ENCODE measurements at regions of chr3 and their contacts with region 1.

Region 1: GRCh38 chr3:71247221-71247976 is 336.1 kb downstream of the FOXP1 start:
- DNase-seq: no peak
- ATAC-seq: no peak
- H3K4me3 ChIP-seq: no peak overlapping the region
- H3K27ac ChIP-seq: peak overlapping the region in 1 of 2 donors; percentile 42
- H3K4me1 ChIP-seq: peaks cover 0 to 2% of the 10 kb centered on the region in 2 donors
- H3K27me3 ChIP-seq: no peaks in the 10 kb centered on the region

Region 2: GRCh38 chr3:71103430-71103921 is 143.9 kb before region 1 on chr3:
- intact Hi-C with region 1: loop called in 1 of 2 experiments (anchors 5 kb)
- DNase-seq: peak; percentile 68 to 85
- ATAC-seq: no peak
- H3K4me3 ChIP-seq: no peak overlapping the region
- H3K27ac ChIP-seq: peak overlapping the region in 1 of 2 donors; percentile 91
- H3K4me1 ChIP-seq: peaks cover 17 to 26% of the 10 kb centered on the region in 2 donors
- H3K27me3 ChIP-seq: no peaks in the 10 kb centered on the region

Region 3: GRCh38 chr3:71117572-71118247 is 129.7 kb before region 1 on chr3:
- intact Hi-C with region 1: loop called in 1 of 2 experiments (anchors 5 kb)
- DNase-seq: no peak
- ATAC-seq: no peak
- H3K4me3 ChIP-seq: no peak overlapping the region
- H3K27ac ChIP-seq: peak overlapping the region; percentile 1 to 58
- H3K4me1 ChIP-seq: peaks cover 11 to 15% of the 10 kb centered on the region in 2 donors
- H3K27me3 ChIP-seq: no peaks in the 10 kb centered on the region

Region 4: GRCh38 chr3:71130471-71131374 is 116.7 kb before region 1 on chr3:
- intact Hi-C with region 1: loop called in 1 of 2 experiments (anchors 5 kb)
- DNase-seq: peak in 1 of 2 donors; percentile 82
- ATAC-seq: peak; percentile 69
- H3K4me3 ChIP-seq: peak overlapping the region; percentile 89 to 99
- H3K27ac ChIP-seq: peak overlapping the region; percentile 98 to 99
- H3K4me1 ChIP-seq: peaks cover 0 to 2% of the 10 kb centered on the region in 2 donors
- H3K27me3 ChIP-seq: no peaks in the 10 kb centered on the region

Region 5: DNA sequence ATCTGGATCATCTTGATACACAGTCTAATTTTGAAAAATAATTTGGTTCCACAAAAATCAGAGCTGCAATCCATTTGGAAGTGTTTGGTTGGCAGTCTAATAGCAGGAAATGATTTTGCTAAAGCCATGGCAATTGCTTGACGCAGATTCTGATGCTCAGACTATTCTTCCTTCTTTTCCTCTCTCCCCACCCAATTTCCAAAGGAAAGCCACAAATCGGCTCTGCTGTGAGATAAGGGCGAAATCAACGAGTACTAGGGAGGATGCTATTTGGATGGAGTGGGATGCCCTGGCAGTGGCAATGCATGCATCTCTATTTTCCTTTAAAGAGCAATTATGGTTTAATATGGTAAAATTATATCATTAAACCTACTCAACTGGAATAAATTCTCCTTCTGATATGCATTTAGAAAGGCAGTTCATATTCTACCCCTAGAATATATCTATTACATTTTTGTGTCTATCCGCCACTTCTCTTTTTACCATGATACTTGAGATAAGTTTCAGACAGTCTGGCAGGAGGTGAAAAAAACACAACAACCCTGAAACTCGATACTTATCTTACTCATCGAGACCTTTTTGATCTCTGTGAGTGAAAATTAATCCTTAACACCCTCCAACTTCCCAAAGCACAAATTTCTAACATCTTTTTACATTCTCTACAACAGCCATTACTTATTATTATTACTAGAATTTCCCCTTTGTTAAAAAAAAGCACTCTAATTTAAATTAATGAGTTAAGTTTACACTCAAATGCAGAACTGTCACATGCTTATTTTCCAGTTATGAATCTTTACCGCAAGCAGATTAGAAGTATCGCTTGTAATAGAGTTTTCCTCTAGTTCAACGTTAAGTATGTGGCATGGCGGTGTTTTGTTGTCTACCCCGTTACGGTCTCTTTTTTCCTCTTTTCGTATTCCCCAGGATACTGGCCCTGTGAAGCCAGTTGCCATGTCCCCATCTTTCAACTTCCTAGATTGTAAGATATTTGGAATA is 97.1 kb before region 1 on chr3:
- intact Hi-C with region 1: no loop called
- DNase-seq: no peak
- ATAC-seq: no peak
- H3K4me3 ChIP-seq: no peak overlapping the region
- H3K27ac ChIP-seq: no peak overlapping the region
- H3K4me1 ChIP-seq: peaks cover 2% of the 10 kb centered on the region in 2 donors
- H3K27me3 ChIP-seq: no peaks in the 10 kb centered on the region

Region 6: GRCh38 chr3:71168880-71169411 is 78.5 kb before region 1 on chr3:
- intact Hi-C with region 1: loop called (anchors 2 to 5 kb)
- DNase-seq: no peak
- ATAC-seq: no peak
- H3K4me3 ChIP-seq: peak overlapping the region in 1 of 2 donors; percentile 41
- H3K27ac ChIP-seq: peak overlapping the region; percentile 95 to 99
- H3K4me1 ChIP-seq: peaks cover 4 to 27% of the 10 kb centered on the region in 2 donors
- H3K27me3 ChIP-seq: no peaks in the 10 kb centered on the region

Region 7: DNA sequence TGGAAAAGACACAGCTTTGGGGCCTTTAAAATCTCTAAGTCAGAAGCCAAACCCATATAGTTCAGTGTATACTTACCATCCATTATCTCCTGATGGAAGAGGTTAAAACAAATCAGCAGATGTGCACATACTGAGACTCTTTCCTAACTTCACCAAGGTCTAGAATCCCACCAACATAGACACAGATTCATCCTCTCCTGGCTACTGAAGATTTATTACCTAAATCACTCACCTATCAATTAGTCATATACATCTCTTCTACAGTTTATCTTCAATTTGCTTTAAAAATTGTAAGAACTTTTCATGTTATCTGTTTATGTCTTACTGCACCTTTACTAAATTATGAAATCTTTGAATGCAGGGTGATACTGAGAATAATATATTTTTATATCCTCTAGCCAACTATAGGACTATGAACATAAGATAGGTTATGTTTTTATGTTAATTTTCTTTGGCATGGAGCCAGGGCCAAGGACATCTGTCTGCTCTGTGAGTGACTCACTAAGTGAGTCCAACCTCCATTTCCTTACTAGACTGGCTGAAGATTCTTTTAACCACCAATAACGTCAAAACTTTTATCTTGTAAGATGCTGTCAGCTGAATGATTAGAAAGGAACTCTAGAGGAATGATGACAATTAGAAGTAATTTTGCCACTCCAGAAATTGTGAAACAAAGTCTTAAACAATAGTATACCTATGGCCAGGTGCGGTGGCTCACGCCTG is 61.5 kb before region 1 on chr3:
- intact Hi-C with region 1: no loop called
- DNase-seq: no peak
- ATAC-seq: no peak
- H3K4me3 ChIP-seq: no peak overlapping the region
- H3K27ac ChIP-seq: no peak overlapping the region
- H3K4me1 ChIP-seq: no peaks in the 10 kb centered on the region
- H3K27me3 ChIP-seq: no peaks in the 10 kb centered on the region

Region 8: GRCh38 chr3:71389911-71390573 is 142.6 kb after region 1 on chr3:
- intact Hi-C with region 1: loop called in 1 of 2 experiments (anchors 10 kb)
- DNase-seq: peak in 1 of 2 donors; percentile 84
- ATAC-seq: peak; percentile 76
- H3K4me3 ChIP-seq: no peak overlapping the region
- H3K27ac ChIP-seq: peak overlapping the region in 1 of 2 donors; percentile 37
- H3K4me1 ChIP-seq: peaks cover 2 to 3% of the 10 kb centered on the region in 2 donors
- H3K27me3 ChIP-seq: no peaks in the 10 kb centered on the region

Measured in aorta (tissue), 5 donors.